ENCODE measurements at regions of chr7 and their contacts with region 1.

Region 1: DNA sequence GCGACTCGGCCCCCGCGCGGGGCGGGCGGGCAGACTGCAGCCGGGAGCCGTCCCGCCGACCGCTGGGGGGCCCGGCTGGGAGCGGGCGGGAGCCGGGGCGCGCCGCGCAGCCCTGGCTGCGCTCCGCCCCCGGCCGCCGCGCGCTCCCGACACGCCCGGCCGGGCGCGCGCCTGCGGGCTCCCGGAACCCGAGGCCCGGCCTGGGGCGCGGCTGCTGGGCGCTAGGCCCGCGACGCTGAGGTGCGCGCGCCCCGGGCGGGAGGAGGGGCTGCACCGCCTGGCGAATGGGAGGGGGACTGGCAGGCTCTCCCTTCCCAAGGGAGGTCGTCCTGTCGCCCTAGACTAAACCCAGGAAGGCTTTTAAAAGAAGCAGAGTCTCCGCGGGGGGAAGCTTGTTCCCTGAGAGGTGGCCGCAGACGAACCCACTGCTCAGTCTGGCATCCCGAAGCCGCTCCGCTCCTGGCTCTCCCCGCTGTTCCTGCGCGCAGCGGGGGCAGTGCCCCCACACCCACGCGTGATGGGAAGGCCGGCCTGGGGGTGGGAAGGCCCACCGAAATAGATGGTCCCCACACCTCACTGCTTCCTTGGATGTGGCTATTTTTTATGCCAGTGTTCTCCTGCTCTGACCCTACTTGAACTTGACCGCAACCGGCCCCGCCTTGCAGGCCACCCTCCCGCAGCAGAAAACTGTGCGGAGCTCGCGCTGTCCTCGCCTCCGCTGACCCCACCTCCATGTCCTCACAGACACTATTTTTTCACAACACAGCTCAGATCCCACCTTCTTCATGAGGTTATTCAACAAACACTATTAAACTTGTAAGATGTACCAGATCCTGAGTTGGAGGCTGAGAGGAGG is at the start of gene VOPP1:
- DNase-seq: peak; percentile 57
- H3K4me3 Mint-ChIP-seq: peak within 1 kb of the TSS; percentile 94
- H3K27ac Mint-ChIP-seq: peak within 1 kb of the TSS; percentile 92
- H3K4me1 Mint-ChIP-seq: peaks cover 68% of the 10 kb centered on the region
- H3K27me3 Mint-ChIP-seq: no peaks in the 10 kb centered on the region
- total RNA-seq, gene VOPP1: 96.3 and 102 TPM in 2 replicates

Region 2: GRCh38 chr7:55309040-55309991 is 263.3 kb before region 1 on chr7:
- intact Hi-C with region 1: loop called (anchors 1 kb)
- DNase-seq: peak; percentile 61
- H3K4me3 Mint-ChIP-seq: peak overlapping the region; percentile 20
- H3K27ac Mint-ChIP-seq: peak overlapping the region; percentile 93
- H3K4me1 Mint-ChIP-seq: peaks cover 36% of the 10 kb centered on the region
- H3K27me3 Mint-ChIP-seq: peaks cover 20% of the 10 kb centered on the region

Region 3: GRCh38 chr7:55469271-55469681 is 103.3 kb before region 1 on chr7:
- intact Hi-C with region 1: loop called (anchors 1 kb)
- DNase-seq: peak; percentile 16
- H3K4me3 Mint-ChIP-seq: peak overlapping the region; percentile 53
- H3K27ac Mint-ChIP-seq: peak overlapping the region; percentile 74
- H3K4me1 Mint-ChIP-seq: peaks cover 53% of the 10 kb centered on the region
- H3K27me3 Mint-ChIP-seq: no peaks in the 10 kb centered on the region

Region 4: DNA sequence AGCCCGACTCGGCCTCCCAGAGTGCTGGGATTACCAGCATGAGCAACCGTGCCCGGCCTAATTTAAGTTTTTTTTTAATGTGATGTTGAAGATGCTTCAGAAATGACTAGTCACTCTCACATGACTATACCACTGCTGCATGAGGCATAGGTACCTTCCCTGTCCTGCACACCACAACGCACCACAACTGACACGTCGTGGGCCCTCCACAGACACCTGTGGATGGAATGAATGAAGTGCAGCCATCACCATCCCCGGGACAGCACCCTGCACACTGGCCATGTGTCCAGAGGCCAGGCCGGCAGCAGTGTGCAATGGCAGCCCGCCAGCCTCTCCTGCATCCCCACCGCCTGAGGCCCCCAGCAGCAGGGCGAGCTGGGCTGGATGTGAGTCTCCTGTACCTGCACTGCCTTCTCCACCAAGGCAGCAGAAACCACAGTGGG is 55.4 kb before region 1 on chr7:
- intact Hi-C with region 1: loop called (anchors 1 kb)
- DNase-seq: peak; percentile 41
- H3K4me3 Mint-ChIP-seq: peak overlapping the region; percentile 19
- H3K27ac Mint-ChIP-seq: peak overlapping the region; percentile 70
- H3K4me1 Mint-ChIP-seq: peaks cover 78% of the 10 kb centered on the region
- H3K27me3 Mint-ChIP-seq: no peaks in the 10 kb centered on the region

Region 5: GRCh38 chr7:55827577-55827976 is 255.0 kb after region 1 on chr7:
- intact Hi-C with region 1: no loop called
- DNase-seq: no peak
- H3K4me3 Mint-ChIP-seq: no peak overlapping the region
- H3K27ac Mint-ChIP-seq: no peak overlapping the region
- H3K4me1 Mint-ChIP-seq: no peaks in the 10 kb centered on the region
- H3K27me3 Mint-ChIP-seq: no peaks in the 10 kb centered on the region

Region 6: DNA sequence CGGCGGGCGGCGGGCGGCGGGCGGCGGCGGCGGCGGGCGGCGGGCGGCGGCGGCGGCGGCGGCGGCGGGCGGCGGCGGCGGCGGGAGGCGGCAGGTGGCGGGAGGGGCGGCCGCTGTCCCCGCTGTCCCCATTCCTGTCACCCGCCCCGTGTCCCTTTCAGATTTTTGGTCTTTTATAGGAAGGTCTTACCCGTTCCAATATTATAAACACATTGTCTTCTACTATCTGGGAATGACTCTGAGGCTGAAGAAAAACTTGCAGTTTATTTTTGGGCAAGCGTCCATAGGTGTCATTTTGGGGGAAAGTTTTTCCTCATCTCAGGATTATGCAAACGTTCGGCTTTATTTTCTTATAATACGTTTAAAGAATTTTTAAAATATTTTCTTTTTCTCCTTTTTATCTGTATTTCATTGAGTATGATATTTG is 315.2 kb after region 1 on chr7:
- intact Hi-C with region 1: loop called (anchors 10 kb)
- DNase-seq: no peak
- H3K4me3 Mint-ChIP-seq: peak overlapping the region; percentile 87
- H3K27ac Mint-ChIP-seq: peak overlapping the region; percentile 84
- H3K4me1 Mint-ChIP-seq: peaks cover 5% of the 10 kb centered on the region
- H3K27me3 Mint-ChIP-seq: peaks cover 2% of the 10 kb centered on the region

Region 7: GRCh38 chr7:56106108-56107073 is 533.8 kb after region 1 on chr7 and contains the start of gene CHCHD2:
- intact Hi-C with region 1: loop called (anchors 5 kb)
- DNase-seq: peak; percentile 92
- H3K4me3 Mint-ChIP-seq: peak within 1 kb of the TSS; percentile 95
- H3K27ac Mint-ChIP-seq: peak within 1 kb of the TSS; percentile 94
- H3K4me1 Mint-ChIP-seq: peaks cover 21% of the 10 kb centered on the region
- H3K27me3 Mint-ChIP-seq: no peaks in the 10 kb centered on the region
- total RNA-seq, gene CHCHD2: 613 and 617 TPM in 2 replicates